Naive thymus-derived CD4-positive, alpha-beta T cell (primary cell): ENCODE measurements at regions of chr19 and their contacts with region 1.

Region 1: GRCh38 chr19:20776083-20777076 is at the start of gene ZNF66:
- DNase-seq: peak; percentile 84 to 96 (median 95)
- ATAC-seq: peak; percentile 99
- H3K4me3 ChIP-seq: peak within 1 kb of the TSS; percentile 99
- H3K4me3 Mint-ChIP-seq: peak within 1 kb of the TSS; percentile 92 to 100 (median 99)
- H3K27ac ChIP-seq: peak within 1 kb of the TSS; percentile 81
- H3K27ac Mint-ChIP-seq: peak within 1 kb of the TSS; percentile 86 to 97 (median 93)
- H3K4me1 ChIP-seq: peaks cover 0 to 5% of the 10 kb centered on the region in 2 donors
- H3K4me1 Mint-ChIP-seq: peaks cover 3 to 44% (median 31%) of the 10 kb centered on the region in 7 donors
- H3K27me3 ChIP-seq: no peaks in the 10 kb centered on the region
- H3K27me3 Mint-ChIP-seq: no peaks in the 10 kb centered on the region
- total RNA-seq, gene ZNF66: 7.6 to 18.5 (median 12.2) TPM

Region 2: DNA sequence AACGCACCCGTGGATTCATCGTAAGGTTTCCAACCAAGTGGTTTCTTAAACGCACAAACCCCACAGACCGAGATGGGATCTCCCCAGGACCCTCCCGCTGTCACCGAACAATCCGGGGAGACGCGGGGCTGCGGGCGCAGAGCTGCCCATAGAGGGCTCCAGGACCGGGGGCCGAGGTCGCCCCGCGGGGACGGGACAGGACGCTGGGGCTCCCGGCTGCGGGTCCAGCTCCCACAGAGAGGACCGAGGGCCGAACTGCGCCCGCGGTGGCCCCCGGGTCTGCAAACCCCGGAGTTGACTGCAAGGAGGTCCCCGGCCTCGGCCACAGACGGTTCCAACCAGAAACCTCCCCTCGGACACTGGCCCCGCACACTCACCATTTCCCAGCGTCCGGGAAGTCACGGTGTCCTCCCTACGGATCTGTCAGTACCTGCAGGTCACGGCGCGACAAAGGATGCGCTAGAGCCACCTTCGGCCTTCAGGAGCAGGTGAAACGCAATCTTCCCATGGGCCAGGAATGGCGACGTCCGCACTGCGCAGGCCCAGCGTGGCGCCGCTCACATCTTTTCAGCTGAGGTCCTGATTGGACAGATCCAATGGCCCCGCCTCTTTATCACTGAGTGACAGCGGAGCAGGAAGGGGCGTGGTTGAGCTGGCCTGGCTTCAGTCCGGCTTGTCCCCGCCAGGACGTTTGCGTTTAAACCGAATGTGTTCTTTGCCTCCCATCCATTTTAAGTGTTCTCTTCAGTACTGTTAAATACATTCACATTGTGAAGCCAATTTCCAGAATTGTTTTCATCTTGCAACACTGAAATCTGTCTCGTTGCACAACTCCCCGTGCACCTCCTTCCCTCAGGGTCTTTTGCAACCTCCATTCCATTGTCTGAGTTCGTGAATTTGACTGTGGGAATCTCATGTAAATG is 1043.5 kb before region 1 on chr19 and contains the start of gene ZNF14:
- CTCF ChIA-PET with region 1: no interaction called
- POLR2A ChIA-PET with region 1: no interaction called
- intact Hi-C with region 1: no loop called
- DNase-seq: peak; percentile 69 to 91 (median 89)
- ATAC-seq: peak; percentile 100
- H3K4me3 ChIP-seq: peak within 1 kb of the TSS; percentile 78
- H3K4me3 Mint-ChIP-seq: peak within 1 kb of the TSS; percentile 93 to 100 (median 98)
- H3K27ac ChIP-seq: peak within 1 kb of the TSS; percentile 87
- H3K27ac Mint-ChIP-seq: peak within 1 kb of the TSS; percentile 93 to 98 (median 95)
- H3K4me1 ChIP-seq: peaks cover 3 to 7% of the 10 kb centered on the region in 2 donors
- H3K4me1 Mint-ChIP-seq: peaks cover 16 to 39% (median 21%) of the 10 kb centered on the region in 7 donors
- H3K27me3 ChIP-seq: no peaks in the 10 kb centered on the region
- H3K27me3 Mint-ChIP-seq: no peaks in the 10 kb centered on the region
- total RNA-seq, gene ZNF14: 7.0 to 35.0 (median 30.3) TPM

Region 3: DNA sequence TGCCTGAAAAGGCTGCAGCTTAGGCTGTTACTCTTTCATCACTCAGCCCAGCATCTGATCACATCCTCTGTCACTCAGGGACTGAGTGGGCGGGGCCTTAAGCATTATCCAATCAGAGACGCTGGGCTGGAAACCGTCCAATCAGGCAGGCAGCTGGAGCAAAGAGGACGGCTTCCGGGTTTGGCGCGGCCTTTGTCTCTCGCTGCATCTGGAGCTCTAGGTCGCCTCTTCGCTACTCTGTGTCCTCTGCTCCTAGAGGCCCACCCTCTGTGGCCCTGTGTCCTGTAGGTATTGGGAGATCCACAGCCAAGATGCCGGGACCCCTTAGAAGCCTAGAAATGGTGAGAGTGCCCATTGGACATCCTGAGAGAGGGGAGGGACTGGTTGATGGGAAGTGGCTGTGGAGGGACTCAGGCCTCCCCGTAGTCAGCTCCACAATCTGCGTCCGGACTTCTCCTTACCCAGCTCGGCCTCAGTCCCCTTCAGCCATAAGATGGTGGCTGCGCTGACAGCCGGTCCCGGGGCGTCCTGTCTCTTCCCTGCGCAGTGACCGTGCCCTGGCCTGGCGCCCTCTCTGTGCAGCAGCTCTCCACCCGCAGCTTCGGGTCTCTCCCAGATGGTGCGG is 609.2 kb before region 1 on chr19 and contains the start of gene ZNF486:
- CTCF ChIA-PET with region 1: no interaction called
- POLR2A ChIA-PET with region 1: interaction called, 7 read pairs
- intact Hi-C with region 1: loop called (anchors 5 to 10 kb)
- DNase-seq: peak; percentile 73 to 94 (median 90)
- ATAC-seq: peak; percentile 99
- H3K4me3 ChIP-seq: peak within 1 kb of the TSS; percentile 85
- H3K4me3 Mint-ChIP-seq: peak within 1 kb of the TSS; percentile 90 to 99 (median 95)
- H3K27ac ChIP-seq: peak within 1 kb of the TSS; percentile 76
- H3K27ac Mint-ChIP-seq: peak within 1 kb of the TSS; percentile 83 to 98 (median 90)
- H3K4me1 ChIP-seq: peaks cover 9 to 13% of the 10 kb centered on the region in 2 donors
- H3K4me1 Mint-ChIP-seq: peaks cover 13 to 42% (median 36%) of the 10 kb centered on the region in 7 donors
- H3K27me3 ChIP-seq: no peaks in the 10 kb centered on the region
- H3K27me3 Mint-ChIP-seq: no peaks in the 10 kb centered on the region
- total RNA-seq, gene ZNF486: 3.3 to 10.3 (median 4.8) TPM

Region 4: DNA sequence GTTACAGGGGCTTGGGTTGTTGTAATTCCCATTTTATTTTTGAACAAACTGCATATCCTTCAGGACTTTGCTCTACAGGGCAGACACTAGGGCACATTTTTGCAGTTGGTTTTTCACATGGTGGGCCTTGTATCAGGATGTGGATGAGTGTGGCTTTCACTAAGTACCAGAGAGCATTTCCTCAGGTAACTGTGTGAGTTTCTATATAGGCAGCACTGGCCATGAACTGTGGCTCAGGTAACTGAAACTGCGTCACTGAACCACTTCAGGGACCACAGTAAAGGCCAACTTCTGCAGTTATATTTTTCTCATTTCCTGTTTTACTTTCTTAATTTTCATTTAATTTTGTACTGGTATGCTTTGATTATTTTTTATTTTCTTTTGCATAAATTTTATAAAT is 442.9 kb before region 1 on chr19:
- CTCF ChIA-PET with region 1: no interaction called
- POLR2A ChIA-PET with region 1: no interaction called
- intact Hi-C with region 1: no loop called
- DNase-seq: no peak
- ATAC-seq: no peak
- H3K4me3 ChIP-seq: no peak overlapping the region
- H3K4me3 Mint-ChIP-seq: no peak overlapping the region
- H3K27ac ChIP-seq: no peak overlapping the region
- H3K27ac Mint-ChIP-seq: no peak overlapping the region
- H3K4me1 ChIP-seq: no peaks in the 10 kb centered on the region
- H3K4me1 Mint-ChIP-seq: no peaks in the 10 kb centered on the region
- H3K27me3 ChIP-seq: no peaks in the 10 kb centered on the region
- H3K27me3 Mint-ChIP-seq: peaks cover 0 to 6% (median 0%) of the 10 kb centered on the region in 5 donors

Region 5: GRCh38 chr19:20388826-20389225 is 387.6 kb before region 1 on chr19:
- CTCF ChIA-PET with region 1: no interaction called
- POLR2A ChIA-PET with region 1: no interaction called
- intact Hi-C with region 1: no loop called
- DNase-seq: no peak
- ATAC-seq: no peak
- H3K4me3 ChIP-seq: no peak overlapping the region
- H3K4me3 Mint-ChIP-seq: no peak overlapping the region
- H3K27ac ChIP-seq: no peak overlapping the region
- H3K27ac Mint-ChIP-seq: no peak overlapping the region
- H3K4me1 ChIP-seq: no peaks in the 10 kb centered on the region
- H3K4me1 Mint-ChIP-seq: no peaks in the 10 kb centered on the region
- H3K27me3 ChIP-seq: no peaks in the 10 kb centered on the region
- H3K27me3 Mint-ChIP-seq: peaks cover 0 to 8% (median 0%) of the 10 kb centered on the region in 5 donors

Region 6: GRCh38 chr19:20565321-20566018 is 210.9 kb before region 1 on chr19 and contains the start of gene ZNF737:
- CTCF ChIA-PET with region 1: no interaction called
- POLR2A ChIA-PET with region 1: interaction called, 17 read pairs
- intact Hi-C with region 1: loop called in 1 of 2 experiments (anchors 1 kb)
- DNase-seq: peak; percentile 78 to 95 (median 89)
- ATAC-seq: peak; percentile 97
- H3K4me3 ChIP-seq: peak within 1 kb of the TSS; percentile 92
- H3K4me3 Mint-ChIP-seq: peak within 1 kb of the TSS; percentile 94 to 100 (median 99)
- H3K27ac ChIP-seq: peak within 1 kb of the TSS; percentile 82
- H3K27ac Mint-ChIP-seq: peak within 1 kb of the TSS; percentile 94 to 99 (median 97)
- H3K4me1 ChIP-seq: no peaks in the 10 kb centered on the region
- H3K4me1 Mint-ChIP-seq: peaks cover 0 to 39% (median 37%) of the 10 kb centered on the region in 7 donors
- H3K27me3 ChIP-seq: no peaks in the 10 kb centered on the region
- H3K27me3 Mint-ChIP-seq: no peaks in the 10 kb centered on the region
- total RNA-seq, gene ZNF737: 13.3 to 43.2 (median 14.9) TPM

Region 7: GRCh38 chr19:21028969-21029268 is 252.5 kb after region 1 on chr19:
- CTCF ChIA-PET with region 1: no interaction called
- POLR2A ChIA-PET with region 1: no interaction called
- intact Hi-C with region 1: no loop called
- DNase-seq: no peak
- ATAC-seq: no peak
- H3K4me3 ChIP-seq: no peak overlapping the region
- H3K4me3 Mint-ChIP-seq: peak overlapping the region in 2 of 10 donors; percentile 2 to 100
- H3K27ac ChIP-seq: no peak overlapping the region
- H3K27ac Mint-ChIP-seq: peak overlapping the region in 5 of 9 donors; percentile 6 to 69 (median 37)
- H3K4me1 ChIP-seq: peaks cover 20 to 22% of the 10 kb centered on the region in 2 donors
- H3K4me1 Mint-ChIP-seq: peaks cover 36 to 86% (median 73%) of the 10 kb centered on the region in 7 donors
- H3K27me3 ChIP-seq: no peaks in the 10 kb centered on the region
- H3K27me3 Mint-ChIP-seq: no peaks in the 10 kb centered on the region

Region 8: DNA sequence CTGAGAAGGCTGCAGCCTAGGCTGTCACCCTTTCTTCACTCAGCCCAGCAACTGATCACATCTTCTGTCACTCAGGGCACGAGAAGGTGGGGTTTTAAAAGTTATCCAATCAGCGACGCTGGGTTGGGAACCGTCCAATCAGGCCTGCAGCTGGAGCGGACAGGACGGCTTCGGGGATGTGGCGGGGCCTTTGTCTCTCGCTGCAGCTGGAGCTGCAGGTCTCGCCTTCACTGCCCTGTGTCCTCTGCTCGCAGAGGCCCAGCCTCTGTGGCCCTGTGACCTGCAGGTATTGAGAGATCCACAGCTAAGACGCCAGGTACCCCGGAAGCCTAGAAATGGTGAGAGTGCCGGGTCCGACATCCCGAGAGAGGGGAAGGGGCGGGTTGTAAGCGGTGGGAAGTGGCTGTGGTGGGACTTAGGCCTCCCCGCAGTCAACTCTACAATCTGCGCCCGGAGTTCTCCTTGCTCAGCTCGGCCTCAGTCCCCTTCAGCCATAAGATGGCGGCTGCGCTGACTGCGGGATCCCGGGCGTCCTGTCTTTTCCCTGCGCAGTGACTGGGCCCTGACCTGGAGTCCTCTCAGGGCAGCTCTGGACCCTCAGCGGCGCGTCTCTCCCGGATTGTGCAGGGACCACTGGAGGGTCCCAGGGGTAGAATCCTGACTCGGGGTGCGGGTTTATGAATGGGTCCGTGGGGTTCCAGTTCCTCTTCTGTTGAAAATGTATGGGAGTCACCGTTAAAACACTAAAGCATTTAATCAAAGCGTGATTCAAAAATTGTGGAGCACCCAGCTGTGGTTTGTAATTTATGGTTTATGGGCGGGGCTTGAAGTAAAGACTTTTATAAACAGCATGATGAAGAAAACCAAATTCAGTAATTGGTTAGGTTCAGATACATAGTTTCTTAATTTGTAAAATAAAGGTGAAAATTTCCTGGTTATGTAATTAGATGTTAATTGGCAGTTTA is 305.9 kb after region 1 on chr19 and contains the start of gene ZNF714:
- CTCF ChIA-PET with region 1: no interaction called
- POLR2A ChIA-PET with region 1: no interaction called
- intact Hi-C with region 1: loop called in 1 of 2 experiments (anchors 1 kb)
- DNase-seq: peak; percentile 55 to 90 (median 80)
- ATAC-seq: peak; percentile 100
- H3K4me3 ChIP-seq: peak within 1 kb of the TSS; percentile 92
- H3K4me3 Mint-ChIP-seq: peak within 1 kb of the TSS; percentile 91 to 100 (median 99)
- H3K27ac ChIP-seq: peak within 1 kb of the TSS; percentile 74
- H3K27ac Mint-ChIP-seq: peak within 1 kb of the TSS; percentile 85 to 99 (median 95)
- H3K4me1 ChIP-seq: no peaks in the 10 kb centered on the region
- H3K4me1 Mint-ChIP-seq: peaks cover 3 to 24% (median 18%) of the 10 kb centered on the region in 7 donors
- H3K27me3 ChIP-seq: no peaks in the 10 kb centered on the region
- H3K27me3 Mint-ChIP-seq: no peaks in the 10 kb centered on the region
- total RNA-seq, gene ZNF714: 7.4 to 22.3 (median 13.3) TPM

Region 9: DNA sequence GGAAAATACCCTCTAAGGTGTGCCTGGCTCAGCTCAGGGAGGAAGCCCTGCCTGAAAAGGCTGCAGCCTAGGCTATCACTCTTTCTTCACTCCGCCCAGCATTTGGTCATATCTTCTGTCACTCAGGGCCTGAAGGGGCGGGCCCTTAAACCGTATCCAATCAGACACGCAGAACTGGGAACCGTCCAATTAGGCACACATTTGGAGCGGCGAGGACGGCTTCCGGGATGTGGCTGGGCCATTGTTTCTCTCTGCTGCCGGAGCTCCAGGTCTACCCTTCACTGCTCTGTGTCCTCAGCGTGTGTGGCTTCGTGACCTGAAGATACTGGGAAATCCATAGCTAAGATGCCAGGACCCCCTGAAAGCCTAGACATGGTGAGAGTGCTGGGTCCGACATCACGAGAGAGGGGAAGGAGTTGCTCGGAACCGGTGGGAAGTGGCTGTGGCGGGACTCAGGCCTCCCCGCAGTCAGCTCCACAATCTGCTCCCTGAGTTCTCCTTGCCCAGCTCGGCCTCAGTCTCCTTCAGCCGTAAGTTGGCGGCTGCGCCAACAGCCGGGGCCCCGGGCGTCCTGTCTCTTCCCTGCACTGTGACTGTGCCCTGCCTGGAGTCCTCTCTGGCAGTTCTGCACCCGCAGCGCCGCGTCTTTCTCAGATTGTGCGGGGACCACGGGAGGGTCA is 620.7 kb after region 1 on chr19 and contains the start of gene ZNF493:
- CTCF ChIA-PET with region 1: no interaction called
- POLR2A ChIA-PET with region 1: no interaction called
- intact Hi-C with region 1: loop called in 1 of 2 experiments (anchors 5 kb)
- DNase-seq: peak; percentile 76 to 95 (median 91)
- ATAC-seq: peak; percentile 100
- H3K4me3 ChIP-seq: peak within 1 kb of the TSS; percentile 80
- H3K4me3 Mint-ChIP-seq: peak within 1 kb of the TSS; percentile 90 to 99 (median 97)
- H3K27ac ChIP-seq: peak within 1 kb of the TSS; percentile 77
- H3K27ac Mint-ChIP-seq: peak within 1 kb of the TSS; percentile 68 to 97 (median 92)
- H3K4me1 ChIP-seq: peaks cover 6 to 11% of the 10 kb centered on the region in 2 donors
- H3K4me1 Mint-ChIP-seq: peaks cover 19 to 48% (median 32%) of the 10 kb centered on the region in 7 donors
- H3K27me3 ChIP-seq: no peaks in the 10 kb centered on the region
- H3K27me3 Mint-ChIP-seq: peaks cover 0 to 4% (median 0%) of the 10 kb centered on the region in 5 donors
- total RNA-seq, gene ZNF493: 19.7 to 78.3 (median 34.6) TPM

Region 10: DNA sequence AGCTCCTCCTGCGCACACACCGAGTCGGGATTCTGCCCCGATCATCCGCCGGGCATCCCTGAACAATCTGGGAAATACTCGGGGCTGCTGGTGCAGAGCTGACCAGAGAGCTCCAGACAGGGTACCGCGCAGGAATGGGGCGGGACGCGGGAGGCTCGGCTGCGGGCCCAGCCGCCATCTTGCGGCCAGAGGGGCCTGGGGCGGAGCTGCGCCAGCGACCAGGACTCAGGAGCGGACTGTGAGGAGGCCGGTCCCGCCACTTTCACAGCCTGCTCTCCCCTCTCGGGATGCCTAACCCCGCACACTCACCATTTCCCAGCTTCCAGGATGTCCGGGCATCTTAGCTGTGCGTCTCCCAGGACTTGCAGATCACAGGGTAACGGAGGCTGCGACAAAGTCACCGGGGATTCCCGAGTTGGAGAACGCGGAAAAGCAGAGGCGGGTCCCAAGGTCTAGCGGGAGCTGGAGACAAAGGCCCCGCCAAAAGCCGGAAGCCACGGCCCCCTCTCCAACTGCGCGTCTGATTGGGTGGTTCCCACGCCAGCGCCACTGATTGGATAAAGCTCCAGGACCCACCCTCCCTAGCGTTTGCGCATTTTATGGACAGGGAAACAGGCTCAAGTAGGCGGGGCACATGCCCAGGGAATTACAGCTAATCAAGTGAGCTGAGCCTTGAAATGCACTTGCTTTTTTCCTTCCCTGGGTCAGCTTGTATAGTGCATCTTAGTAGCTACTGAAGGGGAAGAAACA is 1075.4 kb after region 1 on chr19:
- CTCF ChIA-PET with region 1: no interaction called
- POLR2A ChIA-PET with region 1: interaction called, 4 read pairs
- intact Hi-C with region 1: loop called in 1 of 2 experiments (anchors 5 kb)
- DNase-seq: peak; percentile 71 to 90 (median 88)
- ATAC-seq: peak; percentile 99
- H3K4me3 ChIP-seq: peak overlapping the region; percentile 98
- H3K4me3 Mint-ChIP-seq: peak overlapping the region; percentile 89 to 96 (median 92)
- H3K27ac ChIP-seq: peak overlapping the region; percentile 90
- H3K27ac Mint-ChIP-seq: peak overlapping the region; percentile 68 to 96 (median 92)
- H3K4me1 ChIP-seq: peaks cover 6 to 10% of the 10 kb centered on the region in 2 donors
- H3K4me1 Mint-ChIP-seq: peaks cover 8 to 34% (median 27%) of the 10 kb centered on the region in 7 donors
- H3K27me3 ChIP-seq: no peaks in the 10 kb centered on the region
- H3K27me3 Mint-ChIP-seq: peaks cover 0 to 1% (median 0%) of the 10 kb centered on the region in 5 donors